GM12878 (cell line): ENCODE measurements at regions of chr17 and their contacts with region 1.

Region 1: GRCh38 chr17:14664511-14664910 is 363.6 kb downstream of the HS3ST3B1 start:
- DNase-seq: no peak
- ATAC-seq: no peak
- H3K4me3 ChIP-seq: no peak overlapping the region
- H3K27ac ChIP-seq: no peak overlapping the region
- H3K4me1 ChIP-seq: no peaks in the 10 kb centered on the region
- H3K27me3 ChIP-seq: no peaks in the 10 kb centered on the region
- CTCF ChIP-seq: no peak
- EP300 ChIP-seq: no peak
- POLR2A ChIP-seq: no peak
- RAD21 ChIP-seq: no peak

Region 2: DNA sequence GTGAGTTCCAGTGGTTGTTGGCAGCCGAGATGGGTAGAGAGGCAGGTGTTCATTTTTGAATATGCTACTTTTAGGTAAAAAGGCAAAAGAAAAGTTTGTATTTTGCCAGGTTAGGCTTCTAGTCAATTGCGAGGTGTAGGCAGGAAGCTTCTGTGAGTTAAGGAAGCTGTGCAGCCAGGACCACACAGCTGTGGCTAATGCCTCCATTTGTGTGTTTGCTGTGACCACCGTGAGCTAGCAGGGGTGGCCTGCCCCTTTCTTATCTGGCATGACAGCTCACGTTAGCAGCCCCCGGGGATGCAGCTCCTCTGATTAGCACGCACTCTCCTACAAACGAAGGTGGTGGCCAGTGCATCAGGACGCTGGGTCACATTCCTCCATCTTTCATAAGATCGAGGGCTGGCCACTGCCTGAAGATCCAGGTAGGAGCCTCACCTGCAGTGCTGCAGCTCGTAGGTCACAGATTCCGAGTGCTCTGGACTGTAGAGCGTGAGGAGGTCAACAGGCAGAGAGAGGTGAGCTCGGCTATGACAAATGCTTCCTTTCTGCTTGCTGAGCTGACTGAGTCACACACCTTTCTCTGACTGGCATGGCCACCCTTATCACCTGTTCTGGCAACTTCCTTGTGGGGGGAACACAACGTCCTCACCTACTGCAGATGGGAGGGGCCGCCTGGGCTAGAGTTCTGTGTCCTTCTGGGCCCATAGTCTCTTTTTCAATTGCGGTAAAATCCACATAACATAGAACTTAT is 119.2 kb before region 1 on chr17:
- CTCF ChIA-PET with region 1: no interaction called
- POLR2A ChIA-PET with region 1: no interaction called
- RAD21 ChIA-PET with region 1: no interaction called
- SMC1A ChIA-PET with region 1: no interaction called
- in situ Hi-C with region 1: no loop called
- intact Hi-C with region 1: no loop called
- DNase-seq: no peak
- ATAC-seq: no peak
- H3K4me3 ChIP-seq: no peak overlapping the region
- H3K27ac ChIP-seq: no peak overlapping the region
- H3K4me1 ChIP-seq: no peaks in the 10 kb centered on the region
- H3K27me3 ChIP-seq: no peaks in the 10 kb centered on the region
- CTCF ChIP-seq: no peak
- EP300 ChIP-seq: no peak
- POLR2A ChIP-seq: no peak
- RAD21 ChIP-seq: no peak

Region 3: DNA sequence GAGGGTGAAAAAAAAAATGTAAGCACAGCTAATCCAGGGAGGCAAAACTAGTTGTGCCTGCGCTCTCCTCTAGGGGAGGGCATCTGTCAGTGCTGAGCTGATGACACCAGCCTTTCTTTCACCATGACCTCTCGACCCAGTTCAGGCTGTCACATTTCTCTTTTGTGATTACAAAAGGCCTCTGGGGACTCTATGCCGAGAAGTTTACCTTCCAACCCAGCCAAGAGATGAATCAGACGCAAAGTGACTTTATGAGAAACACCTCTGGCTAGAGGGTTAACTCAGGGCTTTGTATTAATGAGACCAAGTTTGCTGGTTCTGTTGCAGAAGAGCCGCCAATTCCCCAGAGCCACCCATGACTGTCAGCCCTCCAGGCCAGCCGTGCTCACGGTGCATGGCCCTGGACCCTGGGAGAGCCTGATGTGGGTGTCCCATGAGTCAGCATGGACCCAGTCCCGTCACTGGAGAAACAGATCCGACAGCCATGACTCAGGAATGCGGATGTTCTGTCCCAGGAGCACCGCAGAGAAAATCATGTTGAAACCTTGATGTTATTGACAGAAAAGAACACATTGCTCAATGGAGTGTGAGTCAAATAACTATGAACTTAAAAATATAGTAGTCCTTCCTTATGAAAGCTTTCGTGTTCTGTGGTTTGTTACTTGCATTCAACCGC is 73.6 kb after region 1 on chr17:
- CTCF ChIA-PET with region 1: no interaction called
- POLR2A ChIA-PET with region 1: no interaction called
- RAD21 ChIA-PET with region 1: no interaction called
- SMC1A ChIA-PET with region 1: no interaction called
- in situ Hi-C with region 1: no loop called
- intact Hi-C with region 1: loop called (anchors 10 kb)
- DNase-seq: no peak
- ATAC-seq: no peak
- H3K4me3 ChIP-seq: no peak overlapping the region
- H3K27ac ChIP-seq: no peak overlapping the region
- H3K4me1 ChIP-seq: no peaks in the 10 kb centered on the region
- H3K27me3 ChIP-seq: no peaks in the 10 kb centered on the region
- CTCF ChIP-seq: no peak
- EP300 ChIP-seq: no peak
- POLR2A ChIP-seq: no peak
- RAD21 ChIP-seq: no peak